ENCODE measurements at regions of chr5 and their contacts with region 1.

Region 1: DNA sequence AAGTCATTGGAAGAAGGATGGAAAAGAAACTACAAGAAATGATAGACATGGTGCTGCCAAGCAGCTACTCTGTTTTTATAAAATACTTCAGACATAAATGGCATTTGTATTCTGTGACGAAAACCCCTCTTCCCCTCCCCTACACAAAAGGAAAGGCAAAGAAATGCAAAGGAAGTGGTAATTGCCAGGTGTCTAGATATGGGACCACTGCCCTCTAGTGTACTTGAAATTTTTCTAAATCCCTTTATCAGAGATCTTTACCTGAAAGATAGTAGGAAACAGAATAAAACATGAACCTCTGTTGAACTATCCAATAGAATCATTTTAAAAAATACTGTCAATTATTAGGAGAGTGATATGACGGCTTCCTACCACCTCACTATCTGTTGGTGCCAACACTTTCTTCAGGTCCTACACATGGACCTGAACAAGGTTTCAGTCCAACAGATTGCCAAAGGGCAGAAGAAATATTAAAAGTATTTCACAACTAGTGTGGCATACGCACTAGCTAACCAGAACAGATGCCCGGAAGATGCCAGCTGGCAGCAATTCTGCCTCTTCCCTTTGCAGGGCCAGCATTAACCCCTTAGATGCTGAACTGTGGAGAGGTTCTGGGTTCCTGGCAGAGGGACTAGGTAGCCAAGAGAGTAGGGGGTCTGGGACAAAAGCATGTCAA is 104.1 kb downstream of the TSSK1B start:
- DNase-seq: peak in 1 of 10 donors; percentile 18

Region 2: GRCh38 chr5:112995764-112996618 is 334.7 kb before region 1 on chr5:
- intact Hi-C with region 1: loop called (anchors 2 kb)
- DNase-seq: peak in 8 of 10 donors; percentile 40 to 93 (median 76)

Region 3: GRCh38 chr5:113505181-113505580 is 174.5 kb after region 1 on chr5:
- intact Hi-C with region 1: no loop called
- DNase-seq: no peak